Common myeloid progenitor, CD34-positive (primary cell): ENCODE measurements at regions of chr1 and their contacts with region 1.

Region 1: GRCh38 chr1:113963281-113963906 is 15.9 kb upstream of the OLFML3 start:
- DNase-seq: peak in 2 of 3 donors; percentile 38 to 45
- H3K4me3 ChIP-seq: no peak overlapping the region
- H3K27ac ChIP-seq: no peak overlapping the region
- H3K4me1 ChIP-seq: no peaks in the 10 kb centered on the region
- H3K27me3 ChIP-seq: no peaks in the 10 kb centered on the region

Region 2: DNA sequence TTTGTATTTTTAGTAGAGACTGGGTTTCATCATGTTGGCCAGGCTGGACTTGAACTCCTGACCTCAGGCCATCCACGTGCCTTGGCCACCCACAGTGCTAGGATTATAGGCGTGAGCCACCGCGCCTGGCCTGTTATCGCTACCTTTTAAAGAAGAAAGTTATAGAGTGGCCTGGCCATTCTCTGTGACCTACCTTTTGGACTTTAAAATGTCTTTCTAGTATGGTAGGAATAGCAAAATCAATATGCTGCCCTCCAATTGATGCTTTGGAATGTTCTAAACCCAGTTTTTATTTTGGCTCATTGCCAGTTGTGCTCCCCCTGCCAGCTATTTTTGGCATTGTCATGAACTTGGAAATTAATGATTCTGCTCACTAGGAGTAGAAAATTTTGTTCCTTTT is 14.4 kb before region 1 on chr1:
- CTCF ChIA-PET with region 1: interaction called, 16 read pairs
- POLR2A ChIA-PET with region 1: no interaction called
- DNase-seq: peak; percentile 54 to 69 (median 55)
- H3K4me3 ChIP-seq: no peak overlapping the region
- H3K27ac ChIP-seq: peak overlapping the region in 1 of 2 experiments; percentile 5
- H3K4me1 ChIP-seq: peaks cover 26 to 38% (median 31%) of the 10 kb centered on the region in 4 experiments
- H3K27me3 ChIP-seq: no peaks in the 10 kb centered on the region

Region 3: DNA sequence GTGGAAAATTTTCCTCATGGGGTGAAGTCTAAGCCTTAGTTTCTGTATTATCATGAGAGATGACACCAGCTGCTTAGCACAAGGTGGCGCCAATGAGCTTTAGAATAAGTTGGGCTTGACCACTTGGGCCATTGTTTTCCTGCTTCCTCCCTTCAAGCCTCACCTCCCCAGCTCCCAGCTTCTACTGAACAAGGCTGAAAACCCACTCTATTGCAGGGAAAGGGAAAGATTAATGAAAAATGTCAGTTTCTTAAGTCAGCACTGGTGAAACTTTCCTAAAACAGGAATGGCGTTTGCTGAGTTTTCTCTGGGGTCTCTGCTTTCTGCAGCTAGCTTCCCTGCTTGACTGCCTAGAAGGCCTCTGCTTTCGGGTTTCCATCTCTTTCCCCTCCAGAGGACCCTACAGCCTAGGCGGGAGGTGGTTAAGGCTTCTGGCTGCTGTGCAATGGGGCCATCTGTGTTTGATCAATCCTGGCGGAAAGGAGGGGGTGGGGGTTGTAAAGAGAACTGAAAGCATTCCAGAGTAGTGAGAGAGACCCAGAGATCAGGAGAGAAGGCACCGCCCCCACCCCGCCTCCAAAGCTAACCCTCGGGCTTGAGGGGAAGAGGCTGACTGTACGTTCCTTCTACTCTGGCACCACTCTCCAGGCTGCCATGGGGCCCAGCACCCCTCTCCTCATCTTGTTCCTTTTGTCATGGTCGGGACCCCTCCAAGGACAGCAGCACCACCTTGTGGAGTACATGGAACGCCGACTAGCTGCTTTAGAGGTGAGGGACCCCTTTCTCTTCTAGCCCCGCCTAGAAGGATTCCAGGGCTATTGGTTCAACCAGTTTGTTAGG is 15.7 kb after region 1 on chr1 and contains the start of gene OLFML3:
- CTCF ChIA-PET with region 1: interaction called, 10 read pairs
- POLR2A ChIA-PET with region 1: interaction called, 3 read pairs
- DNase-seq: peak; percentile 54 to 75 (median 74)
- H3K4me3 ChIP-seq: peak within 1 kb of the TSS in 1 of 7 experiments; percentile 11
- H3K27ac ChIP-seq: no peak within 1 kb of the TSS
- H3K4me1 ChIP-seq: peaks cover 19 to 74% (median 53%) of the 10 kb centered on the region in 4 experiments
- H3K27me3 ChIP-seq: peaks cover 0 to 13% (median 0%) of the 10 kb centered on the region in 5 experiments

Region 4: DNA sequence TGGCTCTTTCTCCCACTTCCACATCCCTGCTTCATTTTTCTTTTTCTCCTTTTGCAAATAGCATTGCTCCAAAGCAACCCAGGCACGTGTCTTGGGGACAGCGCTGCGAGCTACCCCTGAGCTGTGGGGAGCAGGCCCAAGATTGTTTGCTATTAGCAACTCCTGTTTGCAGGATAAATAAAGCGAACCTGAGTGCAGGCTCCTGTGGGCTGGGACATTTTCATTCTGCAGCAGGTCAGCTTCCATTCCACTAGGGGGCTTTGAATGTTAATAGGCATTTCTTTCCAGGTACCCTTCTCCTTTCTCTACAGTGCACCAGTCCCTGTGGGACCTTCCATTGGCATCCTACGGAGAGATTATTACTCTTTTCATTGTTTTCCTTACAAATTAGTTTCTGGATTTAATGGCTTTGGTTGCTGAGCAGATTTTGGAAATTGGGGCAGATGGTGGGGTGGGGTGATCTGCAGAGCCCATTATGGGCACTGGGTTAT is 69.9 kb after region 1 on chr1:
- CTCF ChIA-PET with region 1: no interaction called
- POLR2A ChIA-PET with region 1: no interaction called
- DNase-seq: peak; percentile 30 to 54 (median 43)
- H3K4me3 ChIP-seq: no peak overlapping the region
- H3K27ac ChIP-seq: no peak overlapping the region
- H3K4me1 ChIP-seq: no peaks in the 10 kb centered on the region
- H3K27me3 ChIP-seq: no peaks in the 10 kb centered on the region